ENCODE measurements at regions of chr20 and their contacts with region 1.

Region 1: DNA sequence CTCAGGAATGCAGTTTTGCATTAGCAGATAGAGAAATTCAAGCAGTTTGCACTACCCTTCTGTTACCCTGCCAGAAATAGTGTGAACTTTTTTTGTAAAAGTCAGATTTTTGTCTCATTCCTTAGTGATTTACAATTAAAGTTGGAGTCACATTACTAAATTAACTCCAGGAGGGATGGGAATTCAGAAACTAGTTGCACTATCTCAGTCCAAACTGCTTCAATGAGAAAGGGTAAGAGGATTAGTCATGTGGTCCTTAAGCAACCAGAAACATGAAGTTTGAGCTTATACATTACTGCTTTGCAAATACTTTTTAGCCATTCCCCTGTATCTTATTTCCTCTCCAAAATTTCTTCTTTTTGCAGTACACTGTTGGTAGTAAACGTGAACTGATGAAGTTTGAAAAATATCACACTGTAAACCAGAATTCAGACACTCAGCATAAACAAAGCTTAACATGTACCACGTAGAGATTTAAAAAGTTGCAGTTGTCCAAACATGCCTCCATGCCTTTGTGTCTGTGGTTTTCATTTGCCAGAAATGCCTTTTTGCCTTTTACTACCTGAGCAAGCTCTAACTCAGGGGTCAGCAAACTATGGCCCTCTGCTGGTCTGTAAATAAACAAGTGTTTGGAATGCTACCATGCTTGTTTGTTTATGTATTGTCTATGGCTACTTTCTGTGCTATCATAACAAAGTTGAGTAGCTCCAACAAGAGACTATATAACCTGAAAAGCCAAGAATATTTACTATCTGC is 49.7 kb downstream of the TP53INP2 start:
- DNase-seq: no peak
- ATAC-seq: no peak
- H3K4me3 ChIP-seq: no peak overlapping the region
- H3K27ac ChIP-seq: no peak overlapping the region
- H3K4me1 ChIP-seq: no peaks in the 10 kb centered on the region
- H3K27me3 ChIP-seq: no peaks in the 10 kb centered on the region
- CTCF ChIP-seq: 0 out of 2 replicates have a peak, but pooled peaks have one; percentile 21

Region 2: DNA sequence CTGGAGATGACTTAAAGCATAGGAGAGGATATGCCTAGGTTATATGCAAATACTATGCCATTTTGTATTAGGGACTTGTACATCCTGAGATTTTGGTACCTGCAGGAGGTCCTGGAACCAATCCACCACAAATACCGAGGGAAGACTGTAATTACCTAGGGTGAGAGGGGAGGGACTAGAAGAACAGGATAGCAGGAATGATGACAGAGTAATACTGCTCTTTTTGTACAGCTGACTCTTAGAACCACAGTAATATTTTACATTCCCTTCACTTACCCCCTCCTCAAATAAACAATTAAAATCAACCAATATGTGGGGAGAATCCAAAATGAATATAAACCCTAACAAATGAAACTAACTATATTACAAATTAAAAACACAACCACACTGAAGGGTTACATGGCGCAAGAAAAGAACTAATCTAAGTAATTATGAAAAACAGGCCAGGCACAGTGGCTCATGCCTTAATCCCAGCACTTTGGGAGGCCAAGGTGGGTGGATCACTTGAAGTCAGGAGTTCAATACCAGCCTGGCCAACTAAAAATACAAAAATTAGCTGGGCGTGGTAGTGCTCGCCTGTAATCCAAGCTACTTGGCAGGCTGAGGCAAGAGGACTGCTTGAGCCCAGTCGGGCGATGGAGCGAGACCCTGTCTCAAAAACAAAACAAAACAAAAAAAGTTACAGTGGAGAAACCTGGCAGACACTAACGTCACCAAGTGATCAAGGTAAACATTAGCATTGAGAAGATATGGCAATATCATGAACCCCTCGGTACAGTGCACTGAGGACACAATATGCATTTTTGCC is 158.3 kb before region 1 on chr20:
- CTCF ChIA-PET with region 1: no interaction called
- POLR2A ChIA-PET with region 1: interaction called, 29 read pairs
- intact Hi-C with region 1: no loop called
- DNase-seq: no peak
- ATAC-seq: no peak
- H3K4me3 ChIP-seq: no peak overlapping the region
- H3K27ac ChIP-seq: no peak overlapping the region
- H3K4me1 ChIP-seq: no peaks in the 10 kb centered on the region
- H3K27me3 ChIP-seq: no peaks in the 10 kb centered on the region
- CTCF ChIP-seq: no peak